Dorsolateral prefrontal cortex (tissue), 120 donors: ENCODE measurements at regions of chr14 and their contacts with region 1.

Region 1: DNA sequence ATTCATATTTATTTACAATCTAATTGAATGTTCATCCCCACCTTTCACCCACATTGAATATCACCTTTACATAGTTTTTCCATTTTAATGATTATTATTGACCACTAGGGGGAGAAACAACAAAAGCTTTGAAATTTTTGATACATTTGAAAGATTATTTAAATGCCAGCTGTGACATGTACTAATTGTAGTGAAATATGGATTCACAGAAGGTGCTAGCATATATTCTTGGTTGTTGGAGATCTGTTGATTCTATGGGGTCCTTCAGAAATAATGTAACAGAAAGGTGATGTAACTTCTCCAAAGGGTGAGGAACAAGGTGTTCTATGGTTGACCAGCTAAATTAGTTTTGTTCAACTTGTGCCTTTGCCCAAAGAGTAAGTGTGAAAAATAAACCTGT is 22.4 kb upstream of the GPR33 start:
- DNase-seq: no peak
- H3K4me3 ChIP-seq: no peak overlapping the region
- H3K27ac ChIP-seq: no peak overlapping the region
- H3K27me3 ChIP-seq: no peaks in the 10 kb centered on the region
- CTCF ChIP-seq: peak; percentile 59 to 97 (median 77)

Region 2: GRCh38 chr14:31937721-31938346 is 427.6 kb after region 1 on chr14:
- intact Hi-C with region 1: loop called in 1 of 2 experiments (anchors 10 kb)
- DNase-seq: peak in 5 of 10 donors; percentile 41 to 76 (median 64)
- H3K4me3 ChIP-seq: no peak overlapping the region
- H3K27ac ChIP-seq: no peak overlapping the region
- H3K27me3 ChIP-seq: no peaks in the 10 kb centered on the region
- CTCF ChIP-seq: no peak